Gastrocnemius medialis (tissue), 4 donors: ENCODE measurements at regions of chr16 and their contacts with region 1.

Region 1: GRCh38 chr16:83630979-83631378 is 176.8 kb upstream of the HSBP1 start:
- DNase-seq: no peak
- ATAC-seq: no peak
- H3K4me3 ChIP-seq: no peak overlapping the region
- H3K27ac ChIP-seq: no peak overlapping the region
- H3K4me1 ChIP-seq: no peaks in the 10 kb centered on the region
- H3K27me3 ChIP-seq: no peaks in the 10 kb centered on the region
- CTCF ChIP-seq: no peak
- POLR2A ChIP-seq: no peak

Region 2: GRCh38 chr16:83533193-83533592 is 97.8 kb before region 1 on chr16:
- in situ Hi-C with region 1: no loop called
- intact Hi-C with region 1: no loop called
- DNase-seq: no peak
- ATAC-seq: no peak
- H3K4me3 ChIP-seq: no peak overlapping the region
- H3K27ac ChIP-seq: no peak overlapping the region
- H3K4me1 ChIP-seq: peaks cover 0 to 9% of the 10 kb centered on the region in 2 donors
- H3K27me3 ChIP-seq: no peaks in the 10 kb centered on the region
- CTCF ChIP-seq: no peak
- POLR2A ChIP-seq: no peak

Region 3: DNA sequence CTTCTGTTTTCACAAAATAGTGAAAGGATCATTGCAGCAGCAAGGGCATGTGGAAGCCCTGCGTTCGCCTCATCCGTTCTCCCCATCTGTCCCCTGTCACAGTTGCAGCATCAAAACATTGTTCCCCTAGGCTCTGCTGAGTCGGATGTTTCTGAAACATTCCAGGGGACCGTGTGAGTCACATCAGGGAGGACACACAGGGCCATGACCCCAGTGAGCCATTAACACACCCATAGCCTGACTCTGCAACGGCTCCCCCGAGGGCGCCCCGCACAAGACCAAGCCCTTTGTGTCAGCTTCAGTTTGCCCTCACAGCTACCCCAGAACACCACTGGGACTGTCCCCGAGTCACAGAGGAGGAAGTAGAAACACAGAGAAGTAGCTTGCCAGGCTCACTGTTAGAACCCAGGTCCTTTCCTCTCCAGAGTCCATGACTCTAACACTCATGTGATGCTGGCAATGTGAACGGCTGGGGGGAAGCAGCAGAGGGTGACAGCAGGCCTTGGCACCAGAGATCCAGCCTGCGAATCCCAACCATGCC is 113.5 kb after region 1 on chr16:
- in situ Hi-C with region 1: loop called in 1 of 4 experiments (anchors 25 kb)
- intact Hi-C with region 1: no loop called
- DNase-seq: peak; percentile 18 to 21
- ATAC-seq: peak in 1 of 2 donors; percentile 33
- H3K4me3 ChIP-seq: no peak overlapping the region
- H3K27ac ChIP-seq: no peak overlapping the region
- H3K4me1 ChIP-seq: no peaks in the 10 kb centered on the region
- H3K27me3 ChIP-seq: no peaks in the 10 kb centered on the region
- CTCF ChIP-seq: no peak
- POLR2A ChIP-seq: no peak